IMR-90 (cell line): ENCODE measurements at regions of chr2 and their contacts with region 1.

Region 1: DNA sequence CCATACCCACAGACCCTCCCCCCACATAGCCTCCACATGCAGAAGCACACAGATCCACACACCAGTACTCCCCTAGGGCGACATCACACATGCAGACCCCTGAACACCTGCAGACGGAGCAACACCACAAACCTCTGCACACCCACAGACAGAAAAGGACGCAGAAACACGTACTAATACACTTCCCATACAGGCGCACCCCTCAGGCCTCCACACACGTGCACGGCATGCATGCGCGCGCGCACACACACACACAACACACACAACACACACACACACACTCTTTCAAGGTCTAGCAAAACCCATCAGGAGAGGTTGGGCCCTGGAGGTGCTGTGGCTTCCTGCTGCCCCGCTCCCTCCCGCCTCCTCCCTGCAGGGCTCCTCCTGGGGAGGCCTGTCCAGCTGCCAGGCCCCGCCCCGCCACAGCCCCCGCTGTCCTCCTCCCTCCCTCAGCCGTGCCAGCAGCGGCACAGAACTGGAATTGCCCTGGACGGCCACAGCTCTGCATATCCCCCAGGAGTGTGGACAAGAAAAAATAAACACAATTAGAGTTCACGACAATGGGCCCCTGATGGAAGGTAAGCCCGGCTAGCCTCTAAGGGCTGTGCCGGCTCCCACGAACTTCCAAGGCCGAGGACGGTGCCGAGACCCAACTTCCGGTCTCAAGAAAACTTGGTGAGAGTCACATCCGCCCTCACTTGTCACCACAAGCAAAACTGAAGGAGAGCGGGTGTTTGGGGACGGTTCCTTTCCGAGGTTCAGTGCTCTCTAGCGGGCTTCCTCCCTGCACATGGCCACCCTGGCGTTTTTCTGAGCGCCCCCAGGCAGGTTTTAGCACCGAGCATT is 6.8 kb downstream of the ZFP36L2 start:
- DNase-seq: peak; percentile 80
- ATAC-seq: peak; percentile 54
- H3K4me3 ChIP-seq: peak overlapping the region; percentile 42
- H3K27ac ChIP-seq: peak overlapping the region; percentile 98
- H3K4me1 ChIP-seq: peaks cover 22% of the 10 kb centered on the region
- H3K27me3 ChIP-seq: no peaks in the 10 kb centered on the region
- CTCF ChIP-seq: 0 out of 2 replicates have a peak, but pooled peaks have one; percentile 2
- POLR2A ChIP-seq: no peak
- RAD21 ChIP-seq: no peak

Region 2: DNA sequence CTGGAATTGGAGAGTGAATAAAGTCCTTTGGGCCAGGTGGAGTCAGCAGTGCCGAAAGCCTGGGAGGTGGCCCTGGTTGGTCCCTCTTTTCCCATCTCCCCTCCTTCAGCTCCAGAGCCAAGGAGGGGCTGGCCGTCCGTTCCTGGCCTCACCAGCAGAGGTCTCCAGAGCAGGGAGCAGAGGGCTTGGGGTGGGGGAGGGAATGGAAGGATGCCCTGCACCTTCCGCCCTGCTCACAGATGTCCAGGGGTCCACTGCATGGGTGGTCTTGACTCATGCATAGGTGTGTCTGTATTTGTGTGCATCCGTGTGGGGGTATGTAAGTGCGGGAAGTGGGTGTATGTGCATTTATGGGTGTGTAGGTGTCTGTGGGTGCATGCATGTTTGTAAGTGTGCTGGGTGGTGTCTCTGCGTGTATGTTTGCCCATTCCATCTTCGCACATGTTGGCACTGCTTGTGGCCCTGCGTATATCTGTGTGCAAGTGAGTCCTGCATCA is 195.0 kb before region 1 on chr2:
- CTCF ChIA-PET with region 1: no interaction called
- POLR2A ChIA-PET with region 1: no interaction called
- dilution Hi-C with region 1: no loop called
- in situ Hi-C with region 1: no loop called
- intact Hi-C with region 1: loop called (anchors 1 kb)
- DNase-seq: peak; percentile 55
- ATAC-seq: peak; percentile 90
- H3K4me3 ChIP-seq: no peak overlapping the region
- H3K27ac ChIP-seq: no peak overlapping the region
- H3K4me1 ChIP-seq: peaks cover 6% of the 10 kb centered on the region
- H3K27me3 ChIP-seq: no peaks in the 10 kb centered on the region
- CTCF ChIP-seq: peak; percentile 71
- POLR2A ChIP-seq: no peak
- RAD21 ChIP-seq: peak; percentile 86

Region 3: DNA sequence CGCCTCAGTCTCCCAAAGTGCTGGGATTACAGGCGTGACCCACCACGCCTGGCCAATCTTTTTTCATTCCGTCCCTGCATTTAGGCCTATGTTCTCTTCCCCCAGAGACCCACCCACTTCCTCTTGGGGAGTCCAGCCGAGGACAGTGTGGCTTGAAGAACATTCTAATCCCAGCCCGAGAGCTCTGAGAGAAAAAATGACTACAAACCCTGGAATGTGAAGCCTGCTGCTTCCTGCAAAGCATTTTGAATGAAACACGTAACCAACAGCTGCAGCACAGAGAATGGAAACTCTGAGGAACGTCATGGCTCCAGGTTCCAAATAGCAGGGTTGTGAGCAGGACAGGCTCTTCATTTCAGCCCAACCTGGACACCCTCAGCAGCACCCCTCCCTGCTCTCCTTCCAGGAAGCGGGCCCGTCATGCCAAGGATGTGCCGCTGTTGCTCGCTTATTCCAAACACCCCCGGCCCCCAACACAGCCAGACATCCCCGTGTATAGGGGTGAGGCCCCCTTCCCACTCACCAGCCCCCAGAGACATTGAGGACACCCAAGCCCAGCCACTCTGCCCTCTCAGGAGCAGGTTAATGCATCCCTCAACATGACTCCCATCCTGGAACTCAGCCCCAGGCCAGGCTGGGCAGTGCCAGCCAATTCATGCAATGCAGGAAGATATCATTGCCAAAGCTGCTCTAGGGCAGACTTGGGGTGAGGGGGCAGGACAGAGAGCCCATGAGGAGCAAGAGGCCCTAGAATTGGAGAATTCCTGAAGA is 133.0 kb before region 1 on chr2:
- CTCF ChIA-PET with region 1: interaction called, 3 read pairs
- POLR2A ChIA-PET with region 1: interaction called, 3 read pairs
- dilution Hi-C with region 1: no loop called
- in situ Hi-C with region 1: no loop called
- intact Hi-C with region 1: loop called (anchors 5 kb)
- DNase-seq: peak; percentile 100
- ATAC-seq: peak; percentile 87
- H3K4me3 ChIP-seq: no peak overlapping the region
- H3K27ac ChIP-seq: peak overlapping the region; percentile 99
- H3K4me1 ChIP-seq: peaks cover 61% of the 10 kb centered on the region
- H3K27me3 ChIP-seq: no peaks in the 10 kb centered on the region
- CTCF ChIP-seq: no peak
- POLR2A ChIP-seq: peak; percentile 64; the same call in 1 of the 2 replicates
- RAD21 ChIP-seq: peak; percentile 29

Region 4: GRCh38 chr2:43131024-43131889 is 88.3 kb before region 1 on chr2:
- CTCF ChIA-PET with region 1: interaction called, 4 read pairs
- POLR2A ChIA-PET with region 1: no interaction called
- dilution Hi-C with region 1: no loop called
- in situ Hi-C with region 1: no loop called
- intact Hi-C with region 1: loop called (anchors 2 kb)
- DNase-seq: peak; percentile 92
- ATAC-seq: peak; percentile 94
- H3K4me3 ChIP-seq: no peak overlapping the region
- H3K27ac ChIP-seq: no peak overlapping the region
- H3K4me1 ChIP-seq: peaks cover 16% of the 10 kb centered on the region
- H3K27me3 ChIP-seq: no peaks in the 10 kb centered on the region
- CTCF ChIP-seq: peak; percentile 34
- POLR2A ChIP-seq: no peak
- RAD21 ChIP-seq: peak; percentile 56

Region 5: GRCh38 chr2:43178602-43179542 is 40.7 kb before region 1 on chr2:
- CTCF ChIA-PET with region 1: no interaction called
- POLR2A ChIA-PET with region 1: no interaction called
- dilution Hi-C with region 1: no loop called
- in situ Hi-C with region 1: no loop called
- intact Hi-C with region 1: loop called (anchors 5 kb)
- DNase-seq: peak; percentile 82
- ATAC-seq: peak; percentile 95
- H3K4me3 ChIP-seq: no peak overlapping the region
- H3K27ac ChIP-seq: peak overlapping the region; percentile 71
- H3K4me1 ChIP-seq: peaks cover 11% of the 10 kb centered on the region
- H3K27me3 ChIP-seq: no peaks in the 10 kb centered on the region
- CTCF ChIP-seq: no peak
- POLR2A ChIP-seq: no peak
- RAD21 ChIP-seq: no peak